Ascending aorta (tissue), 2 donors: ENCODE measurements at regions of chr2 and their contacts with region 1.

Region 1: GRCh38 chr2:54176577-54176976 is 61.2 kb downstream of the ACYP2 start:
- DNase-seq: peak in 1 of 2 donors; percentile 65
- H3K4me3 ChIP-seq: no peak overlapping the region
- H3K27ac ChIP-seq: no peak overlapping the region
- H3K4me1 ChIP-seq: no peaks in the 10 kb centered on the region
- H3K27me3 ChIP-seq: no peaks in the 10 kb centered on the region
- CTCF ChIP-seq: peak in 2 of 3 experiments; percentile 18 to 55

Region 2: DNA sequence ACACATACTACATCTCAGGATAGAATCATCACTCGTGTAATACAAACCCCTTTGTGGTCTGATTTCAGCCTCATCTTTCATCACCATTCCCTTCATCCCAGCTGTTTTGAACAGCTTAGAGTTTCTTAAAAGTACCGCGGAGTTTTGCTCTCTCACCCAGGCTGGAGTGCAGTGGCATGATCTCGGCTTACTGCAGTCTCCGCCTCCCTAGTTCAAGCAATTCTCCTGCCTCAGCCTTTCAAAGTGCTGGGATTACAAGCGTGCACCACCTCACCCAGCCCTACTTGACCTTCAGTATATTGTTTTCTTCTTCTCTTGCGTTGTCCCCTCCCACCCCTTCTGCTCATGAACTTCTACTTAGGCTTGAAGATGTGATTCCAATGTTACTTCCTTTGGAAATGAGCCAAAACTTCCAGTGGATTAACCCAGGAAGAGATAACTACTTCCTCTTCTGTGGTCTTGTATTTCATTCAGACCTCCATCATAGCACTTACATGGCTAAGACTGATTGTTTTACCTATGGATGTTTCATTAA is 373.9 kb before region 1 on chr2:
- intact Hi-C with region 1: no loop called
- DNase-seq: no peak
- H3K4me3 ChIP-seq: no peak overlapping the region
- H3K27ac ChIP-seq: no peak overlapping the region
- H3K4me1 ChIP-seq: no peaks in the 10 kb centered on the region
- H3K27me3 ChIP-seq: no peaks in the 10 kb centered on the region
- CTCF ChIP-seq: no peak

Region 3: GRCh38 chr2:54158311-54158710 is 18.3 kb before region 1 on chr2:
- intact Hi-C with region 1: no loop called
- DNase-seq: no peak
- H3K4me3 ChIP-seq: no peak overlapping the region
- H3K27ac ChIP-seq: no peak overlapping the region
- H3K4me1 ChIP-seq: no peaks in the 10 kb centered on the region
- H3K27me3 ChIP-seq: no peaks in the 10 kb centered on the region
- CTCF ChIP-seq: no peak

Region 4: GRCh38 chr2:54838585-54839035 is 662.0 kb after region 1 on chr2:
- intact Hi-C with region 1: loop called (anchors 10 kb)
- DNase-seq: peak in 1 of 2 donors; percentile 79
- H3K4me3 ChIP-seq: no peak overlapping the region
- H3K27ac ChIP-seq: no peak overlapping the region
- H3K4me1 ChIP-seq: no peaks in the 10 kb centered on the region
- H3K27me3 ChIP-seq: no peaks in the 10 kb centered on the region
- CTCF ChIP-seq: peak; percentile 49 to 82 (median 75)